Activated CD4-positive, alpha-beta T cell treated with anti-CD3 and anti-CD28 coated beads, Interleukin-2, amount 10 ng/mL, durations not matched to agents 7 days and 5 days (primary cell): ENCODE measurements at regions of chr3 and their contacts with region 1.

Region 1: DNA sequence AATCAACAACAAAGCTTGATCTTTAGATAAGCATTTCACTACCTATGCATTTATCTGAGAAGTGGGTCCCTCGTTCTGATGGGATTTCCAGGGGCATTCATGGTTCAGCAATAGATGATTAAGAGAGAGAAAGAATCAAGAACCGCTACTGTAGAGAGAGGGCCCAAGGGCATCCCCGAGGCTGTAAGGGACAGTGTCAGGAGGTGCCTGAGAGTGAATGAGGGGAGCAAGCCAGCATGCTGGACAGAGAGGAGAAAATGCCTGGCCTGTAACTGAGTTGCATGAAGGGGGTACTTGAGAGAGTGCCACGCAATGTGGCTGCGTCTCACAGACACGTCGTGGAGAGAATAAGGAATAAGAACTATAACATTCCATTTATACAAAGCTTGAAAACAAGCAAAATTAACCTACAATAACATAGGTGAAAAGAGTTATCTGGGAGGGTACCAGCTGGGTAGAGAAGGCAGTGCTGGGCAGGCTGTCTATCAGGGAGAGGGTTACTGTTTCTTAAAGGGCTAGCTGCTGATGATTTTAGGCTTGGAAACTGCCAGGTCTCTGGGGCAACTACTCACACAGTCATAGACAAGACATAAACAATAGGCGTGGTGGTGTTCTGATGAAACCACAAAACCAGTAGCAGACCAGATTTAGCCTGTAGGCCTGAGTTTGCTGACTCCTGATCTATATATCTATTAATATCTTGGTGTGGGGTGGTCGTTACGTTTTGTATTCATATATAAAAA is 374.6 kb upstream of the CFAP20DC start:
- DNase-seq: peak; percentile 58
- H3K4me3 Mint-ChIP-seq: peak overlapping the region; percentile 1
- H3K27ac Mint-ChIP-seq: peak overlapping the region; percentile 86
- H3K4me1 Mint-ChIP-seq: peaks cover 65% of the 10 kb centered on the region
- H3K27me3 Mint-ChIP-seq: no peaks in the 10 kb centered on the region

Region 2: GRCh38 chr3:59286791-59287531 is 137.5 kb before region 1 on chr3:
- CTCF ChIA-PET with region 1: no interaction called
- POLR2A ChIA-PET with region 1: no interaction called
- DNase-seq: peak; percentile 14
- H3K4me3 Mint-ChIP-seq: no peak overlapping the region
- H3K27ac Mint-ChIP-seq: peak overlapping the region; percentile 67
- H3K4me1 Mint-ChIP-seq: peaks cover 18% of the 10 kb centered on the region
- H3K27me3 Mint-ChIP-seq: no peaks in the 10 kb centered on the region

Region 3: GRCh38 chr3:59411186-59411585 is 13.3 kb before region 1 on chr3:
- CTCF ChIA-PET with region 1: interaction called, 14 read pairs
- POLR2A ChIA-PET with region 1: no interaction called
- DNase-seq: no peak
- H3K4me3 Mint-ChIP-seq: no peak overlapping the region
- H3K27ac Mint-ChIP-seq: no peak overlapping the region
- H3K4me1 Mint-ChIP-seq: peaks cover 22% of the 10 kb centered on the region
- H3K27me3 Mint-ChIP-seq: no peaks in the 10 kb centered on the region